Mammary epithelial cell (primary cell): ENCODE measurements at regions of chr10 and their contacts with region 1.

Region 1: GRCh38 chr10:24249829-24250415 is 41.0 kb downstream of the KIAA1217 start:
- DNase-seq: peak; percentile 88
- H3K4me3 ChIP-seq: no peak overlapping the region
- H3K27ac ChIP-seq: peak overlapping the region; percentile 71
- H3K4me1 ChIP-seq: peaks cover 33% of the 10 kb centered on the region
- H3K27me3 ChIP-seq: no peaks in the 10 kb centered on the region
- CTCF ChIP-seq: peak in 1 of 2 donors; percentile 26

Region 2: GRCh38 chr10:24324651-24325050 is 74.7 kb after region 1 on chr10:
- CTCF ChIA-PET with region 1: no interaction called
- dilution Hi-C with region 1: no loop called
- in situ Hi-C with region 1: no loop called
- intact Hi-C with region 1: no loop called
- DNase-seq: peak; percentile 67
- H3K4me3 ChIP-seq: no peak overlapping the region
- H3K27ac ChIP-seq: peak overlapping the region; percentile 21
- H3K4me1 ChIP-seq: peaks cover 21% of the 10 kb centered on the region
- H3K27me3 ChIP-seq: no peaks in the 10 kb centered on the region
- CTCF ChIP-seq: no peak

Region 3: GRCh38 chr10:24349379-24350001 is 99.6 kb after region 1 on chr10:
- CTCF ChIA-PET with region 1: no interaction called
- dilution Hi-C with region 1: loop called (anchors 5 kb)
- in situ Hi-C with region 1: no loop called
- intact Hi-C with region 1: no loop called
- DNase-seq: peak; percentile 74
- H3K4me3 ChIP-seq: no peak overlapping the region
- H3K27ac ChIP-seq: no peak overlapping the region
- H3K4me1 ChIP-seq: peaks cover 34% of the 10 kb centered on the region
- H3K27me3 ChIP-seq: no peaks in the 10 kb centered on the region
- CTCF ChIP-seq: no peak